PC-9 (cell line): ENCODE measurements at regions of chr10 and their contacts with region 1.

Region 1: DNA sequence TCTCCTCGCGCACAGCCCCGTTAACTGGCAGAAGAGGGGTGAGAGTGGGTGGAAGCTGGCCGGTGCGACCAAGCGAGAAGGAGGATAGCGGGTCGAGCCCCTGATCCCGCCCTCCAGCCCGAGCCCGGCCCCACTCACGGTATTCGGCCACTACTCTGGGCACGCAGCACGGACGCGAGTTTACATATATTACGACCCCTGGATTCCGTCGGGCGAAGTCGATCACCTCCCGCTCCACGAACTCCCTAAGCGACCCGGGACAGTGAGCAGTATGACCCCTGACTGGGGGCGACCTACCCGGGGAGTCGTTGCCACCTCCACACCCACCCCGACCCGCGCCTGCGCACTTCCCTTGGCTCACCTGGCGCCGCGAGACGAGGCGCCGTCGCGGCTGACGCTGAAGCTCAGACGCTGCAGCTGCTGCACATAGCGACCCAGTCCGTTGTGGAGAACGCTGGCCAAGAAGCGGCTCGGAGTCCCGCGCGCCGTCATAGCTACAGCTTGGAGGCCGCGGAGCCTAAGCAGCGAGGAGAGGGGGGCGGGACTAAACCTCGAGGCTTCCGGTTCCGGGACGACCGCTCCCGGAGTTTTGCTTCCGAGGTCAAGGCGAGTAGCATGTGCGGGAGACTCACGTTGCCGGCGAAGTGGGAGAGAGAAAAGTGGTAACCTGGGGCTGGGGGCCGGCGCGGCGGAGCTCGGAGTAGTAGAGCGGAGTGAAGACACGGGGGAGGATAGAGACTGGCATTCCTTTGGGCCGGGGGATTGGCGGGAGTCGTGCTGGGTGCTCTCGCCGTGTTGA is at the starts of genes MRPL43 and TWNK:
- DNase-seq: peak; percentile 59 to 60
- H3K4me3 ChIP-seq: peak within 1 kb of the TSS; percentile 69
- H3K27ac ChIP-seq: peak within 1 kb of the TSS; percentile 30
- H3K4me1 ChIP-seq: peaks cover 4% of the 10 kb centered on the region
- H3K27me3 ChIP-seq: no peaks in the 10 kb centered on the region
- CTCF ChIP-seq: no peak
- total RNA-seq, gene MRPL43: 41.0 and 45.7 TPM in 2 replicates
- total RNA-seq, gene TWNK: 7.5 and 7.9 TPM in 2 replicates

Region 2: DNA sequence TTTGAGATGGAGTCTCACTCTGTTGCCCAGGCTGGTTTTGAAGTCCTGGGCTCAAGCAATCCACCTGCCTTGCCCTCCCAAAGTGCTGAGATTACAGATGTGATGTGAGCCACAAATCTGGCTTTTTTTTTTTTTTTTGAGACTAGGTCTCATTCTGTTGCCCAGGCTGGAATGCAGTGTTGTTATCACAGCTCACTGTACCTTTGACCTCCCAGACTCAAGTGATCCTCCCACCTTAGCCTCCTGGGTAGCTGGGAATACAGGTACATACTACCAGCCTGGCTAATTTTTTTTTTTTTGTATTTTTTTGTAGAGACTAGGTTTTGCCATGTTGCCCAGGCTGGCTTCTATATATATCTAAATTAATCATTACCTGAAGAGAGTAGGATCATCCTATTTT is 389.0 kb before region 1 on chr10:
- CTCF ChIA-PET with region 1: interaction called, 11 read pairs
- POLR2A ChIA-PET with region 1: interaction called, 3 read pairs
- intact Hi-C with region 1: no loop called
- DNase-seq: no peak
- H3K4me3 ChIP-seq: no peak overlapping the region
- H3K27ac ChIP-seq: no peak overlapping the region
- H3K4me1 ChIP-seq: no peaks in the 10 kb centered on the region
- H3K27me3 ChIP-seq: peaks cover 61% of the 10 kb centered on the region
- CTCF ChIP-seq: no peak

Region 3: DNA sequence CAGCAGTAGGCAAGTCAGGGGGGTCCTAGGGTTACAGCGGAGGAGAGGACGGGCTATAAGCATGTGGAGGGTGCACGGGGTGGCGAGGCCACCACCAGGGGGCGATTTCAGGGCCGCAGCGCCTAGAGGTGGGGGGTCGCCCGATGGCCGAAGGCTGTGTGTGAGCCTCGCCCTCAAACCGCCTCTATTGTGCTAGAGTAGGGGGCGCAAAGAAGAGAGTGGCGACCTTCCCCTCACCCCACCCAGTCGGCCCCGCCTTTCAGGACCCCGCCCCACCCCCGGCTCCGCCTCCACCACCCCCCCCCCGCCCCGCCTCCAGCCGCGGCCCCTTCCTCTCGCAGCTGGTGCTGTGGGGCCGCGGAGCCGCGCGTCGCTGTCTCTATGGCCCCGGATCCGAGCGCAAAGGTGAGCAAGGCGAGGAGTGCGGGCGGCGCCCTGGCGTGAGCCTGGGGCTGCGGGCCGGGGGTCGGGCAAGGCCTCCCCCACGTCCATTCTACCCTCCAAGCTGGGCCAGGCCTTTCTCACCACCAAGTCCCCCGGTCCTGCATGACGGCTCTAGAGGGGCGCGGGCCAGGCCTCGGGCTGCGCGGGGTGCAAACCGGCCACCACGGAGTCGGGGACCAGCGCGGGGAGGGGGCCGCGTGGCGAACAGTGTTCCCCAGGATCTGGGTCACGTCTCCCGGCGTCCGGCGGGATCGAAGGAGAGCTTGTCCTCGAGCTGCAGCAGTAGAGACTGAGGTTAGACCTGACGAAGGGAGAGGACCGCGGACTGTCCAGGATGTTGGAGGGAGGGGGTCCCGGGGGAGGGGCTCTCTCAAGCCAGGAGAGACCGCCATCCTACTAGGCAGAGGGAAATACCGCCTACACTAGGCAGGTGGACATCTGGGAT is 17.7 kb before region 1 on chr10 and contains the start of gene SEMA4G:
- CTCF ChIA-PET with region 1: interaction called, 10 read pairs
- POLR2A ChIA-PET with region 1: no interaction called
- intact Hi-C with region 1: no loop called
- DNase-seq: no peak
- H3K4me3 ChIP-seq: no peak within 1 kb of the TSS
- H3K27ac ChIP-seq: no peak within 1 kb of the TSS
- H3K4me1 ChIP-seq: no peaks in the 10 kb centered on the region
- H3K27me3 ChIP-seq: no peaks in the 10 kb centered on the region
- CTCF ChIP-seq: no peak; the same call in 1 of the 2 replicates
- total RNA-seq, gene SEMA4G: 0.70 and 0.83 TPM in 2 replicates